Activated CD4-positive, alpha-beta T cell treated with anti-CD3 and anti-CD28 coated beads, Interleukin-2, amount 10 ng/mL, durations not matched to agents 7 days and 5 days (primary cell): ENCODE measurements at regions of chr17 and their contacts with region 1.

Region 1: GRCh38 chr17:43483674-43484372 is at the start of gene DHX8:
- DNase-seq: peak; percentile 98
- H3K4me3 Mint-ChIP-seq: peak within 1 kb of the TSS; percentile 96
- H3K27ac Mint-ChIP-seq: peak within 1 kb of the TSS; percentile 97
- H3K4me1 Mint-ChIP-seq: peaks cover 27% of the 10 kb centered on the region
- H3K27me3 Mint-ChIP-seq: no peaks in the 10 kb centered on the region
- total RNA-seq, gene DHX8: 56.0 to 78.8 TPM

Region 2: GRCh38 chr17:43367737-43368242 is 116.0 kb before region 1 on chr17:
- CTCF ChIA-PET with region 1: interaction called, 48 read pairs
- POLR2A ChIA-PET with region 1: interaction called, 23 read pairs
- DNase-seq: peak; percentile 71
- H3K4me3 Mint-ChIP-seq: peak overlapping the region; percentile 97
- H3K27ac Mint-ChIP-seq: peak overlapping the region; percentile 100
- H3K4me1 Mint-ChIP-seq: peaks cover 55% of the 10 kb centered on the region
- H3K27me3 Mint-ChIP-seq: no peaks in the 10 kb centered on the region

Region 3: GRCh38 chr17:43388359-43389045 is 95.3 kb before region 1 on chr17:
- CTCF ChIA-PET with region 1: interaction called, 240 read pairs
- POLR2A ChIA-PET with region 1: interaction called, 3 read pairs
- DNase-seq: peak; percentile 93
- H3K4me3 Mint-ChIP-seq: peak overlapping the region; percentile 85
- H3K27ac Mint-ChIP-seq: peak overlapping the region; percentile 97
- H3K4me1 Mint-ChIP-seq: peaks cover 28% of the 10 kb centered on the region
- H3K27me3 Mint-ChIP-seq: no peaks in the 10 kb centered on the region

Region 4: GRCh38 chr17:43418441-43419374 is 65.1 kb before region 1 on chr17:
- CTCF ChIA-PET with region 1: interaction called, 15 read pairs
- POLR2A ChIA-PET with region 1: no interaction called
- DNase-seq: no peak
- H3K4me3 Mint-ChIP-seq: no peak overlapping the region
- H3K27ac Mint-ChIP-seq: no peak overlapping the region
- H3K4me1 Mint-ChIP-seq: no peaks in the 10 kb centered on the region
- H3K27me3 Mint-ChIP-seq: peaks cover 21% of the 10 kb centered on the region

Region 5: DNA sequence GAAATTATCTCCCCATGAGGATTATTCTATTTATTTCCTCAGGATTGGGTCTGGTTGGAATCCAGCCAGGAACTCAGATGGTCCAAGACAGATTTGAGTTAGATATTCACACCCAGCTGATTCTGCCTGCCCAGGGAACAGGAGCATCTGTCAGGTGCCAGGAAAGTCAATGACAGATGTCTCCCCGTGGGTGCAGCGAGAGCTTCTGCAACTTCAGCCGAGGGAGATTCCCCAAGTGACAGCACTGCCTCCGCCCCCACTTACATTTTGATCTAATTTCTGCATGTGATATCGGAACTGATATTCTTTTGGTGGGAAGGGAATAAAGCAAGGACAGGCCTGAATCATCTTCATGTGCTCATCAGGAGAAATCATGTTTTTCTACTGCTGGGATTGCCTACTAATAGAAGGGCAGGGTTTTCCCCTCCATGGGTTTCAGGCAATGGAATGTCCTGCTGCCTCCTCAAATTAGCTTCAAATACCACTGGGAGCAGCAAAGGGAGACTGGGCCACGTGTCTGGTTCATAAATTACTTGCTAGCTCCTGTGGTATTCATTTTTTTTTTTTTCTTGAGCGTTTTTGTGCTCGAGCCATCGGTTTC is 15.7 kb before region 1 on chr17:
- CTCF ChIA-PET with region 1: interaction called, 53 read pairs
- POLR2A ChIA-PET with region 1: no interaction called
- DNase-seq: no peak
- H3K4me3 Mint-ChIP-seq: no peak overlapping the region
- H3K27ac Mint-ChIP-seq: no peak overlapping the region
- H3K4me1 Mint-ChIP-seq: no peaks in the 10 kb centered on the region
- H3K27me3 Mint-ChIP-seq: peaks cover 10% of the 10 kb centered on the region

Region 6: DNA sequence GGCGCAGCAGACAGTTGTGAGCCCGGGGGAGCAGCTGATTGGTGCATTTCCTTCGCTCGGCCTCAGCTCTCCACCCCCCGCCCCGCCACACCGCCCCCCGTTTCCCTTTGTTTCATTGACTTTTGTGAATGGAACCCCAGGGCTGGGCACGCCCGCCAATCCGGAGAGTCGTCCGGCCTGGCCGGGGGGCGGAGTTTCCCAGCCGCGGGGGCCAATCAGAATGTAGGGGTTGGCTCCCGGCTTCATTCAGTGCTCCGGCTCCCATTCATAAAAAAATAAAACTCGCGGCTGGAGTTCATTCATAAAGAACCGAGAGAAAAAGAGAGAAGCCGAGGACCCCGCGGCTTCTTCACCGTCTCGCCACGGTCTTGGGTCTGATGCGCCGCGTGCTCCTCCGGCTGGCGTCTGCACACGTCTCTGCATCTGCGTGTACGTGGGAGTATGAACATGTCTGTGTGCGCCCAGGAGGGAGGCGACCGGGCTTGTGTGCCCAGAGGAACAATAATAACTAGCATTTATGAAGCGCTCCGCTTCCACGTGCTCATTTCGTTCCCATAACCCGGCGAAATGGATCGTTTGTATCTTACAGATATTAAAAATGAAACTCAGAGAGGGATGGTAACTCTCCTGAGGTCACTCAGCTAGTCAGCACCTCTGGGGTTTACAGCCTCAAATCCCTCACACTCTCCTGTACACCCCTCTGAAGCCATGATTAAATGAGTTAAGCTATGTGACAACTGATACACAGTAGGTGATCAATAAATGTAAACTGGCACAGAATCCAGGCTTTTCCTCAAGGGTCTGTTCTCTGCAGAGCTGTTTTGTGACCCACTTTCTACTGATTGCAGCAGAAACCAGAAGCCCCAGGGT is 62.7 kb after region 1 on chr17 and contains the start of gene ETV4:
- CTCF ChIA-PET with region 1: interaction called, 11 read pairs
- POLR2A ChIA-PET with region 1: interaction called, 3 read pairs
- DNase-seq: peak; percentile 93
- H3K4me3 Mint-ChIP-seq: peak within 1 kb of the TSS; percentile 74
- H3K27ac Mint-ChIP-seq: no peak within 1 kb of the TSS
- H3K4me1 Mint-ChIP-seq: peaks cover 16% of the 10 kb centered on the region
- H3K27me3 Mint-ChIP-seq: peaks cover 64% of the 10 kb centered on the region
- total RNA-seq, gene ETV4: 0.12 TPM in 1 of 2 experiments, not detected in the other

Region 7: DNA sequence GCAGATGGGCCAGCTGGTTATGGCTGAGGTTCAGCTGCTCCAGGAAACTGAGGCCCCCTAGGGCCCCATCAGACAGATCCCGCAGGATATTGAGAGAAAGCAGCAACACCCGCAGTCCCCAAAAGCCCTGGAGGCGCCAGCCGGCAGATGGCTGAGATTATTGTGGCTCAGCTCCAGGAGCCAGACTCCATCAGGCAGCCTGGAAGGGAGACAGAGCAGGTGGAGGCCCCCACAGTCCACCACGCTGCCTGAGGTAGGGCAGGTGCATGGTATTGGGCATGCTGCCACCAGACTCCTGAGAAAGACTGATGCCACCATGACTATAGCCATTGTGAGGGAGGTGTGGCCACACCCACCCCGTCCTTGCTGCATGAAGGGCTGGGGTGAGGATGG is 540.4 kb after region 1 on chr17:
- CTCF ChIA-PET with region 1: no interaction called
- POLR2A ChIA-PET with region 1: no interaction called
- DNase-seq: no peak
- H3K4me3 Mint-ChIP-seq: no peak overlapping the region
- H3K27ac Mint-ChIP-seq: no peak overlapping the region
- H3K4me1 Mint-ChIP-seq: peaks cover 3% of the 10 kb centered on the region
- H3K27me3 Mint-ChIP-seq: no peaks in the 10 kb centered on the region